ENCODE measurements at regions of chr2 and their contacts with region 1.

Region 1: DNA sequence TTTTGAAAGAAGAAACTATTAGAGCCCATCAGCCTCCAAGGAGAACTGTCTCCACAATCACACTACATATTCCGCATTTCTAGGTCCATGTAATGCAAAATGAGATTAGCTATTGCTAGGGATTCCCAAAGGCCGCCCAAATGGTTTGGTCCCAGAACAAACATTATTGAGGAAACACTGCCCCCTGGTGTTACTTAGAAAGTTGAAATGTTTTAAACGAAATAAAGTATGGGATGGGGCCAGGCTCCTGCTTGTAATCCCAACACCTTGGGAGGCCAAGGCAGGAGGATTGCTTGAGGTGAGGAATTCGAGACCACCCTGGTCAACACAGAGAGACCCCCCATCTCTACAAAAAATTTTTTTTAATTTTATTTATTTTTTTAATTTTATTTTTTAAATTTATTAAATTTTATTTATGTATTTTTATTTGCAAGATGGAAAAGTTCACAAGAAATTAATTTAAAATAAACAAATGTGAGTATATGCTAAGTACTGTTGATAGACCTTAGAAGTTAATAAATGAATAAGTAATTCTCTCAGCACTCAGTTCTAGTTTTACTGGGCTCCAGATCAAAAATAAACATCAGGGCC is 5.5 kb downstream of the NHEJ1 start:
- DNase-seq: peak in 4 of 5 donors; percentile 50 to 62 (median 56)
- H3K4me3 ChIP-seq: no peak overlapping the region
- H3K4me3 Mint-ChIP-seq: no peak overlapping the region
- H3K27ac ChIP-seq: no peak overlapping the region
- H3K27ac Mint-ChIP-seq: no peak overlapping the region
- H3K4me1 ChIP-seq: peaks cover 6% of the 10 kb centered on the region
- H3K4me1 Mint-ChIP-seq: peaks cover 7 to 9% (median 8%) of the 10 kb centered on the region in 4 donors
- H3K27me3 ChIP-seq: no peaks in the 10 kb centered on the region
- H3K27me3 Mint-ChIP-seq: no peaks in the 10 kb centered on the region

Region 2: GRCh38 chr2:218995972-218996711 is 159.0 kb before region 1 on chr2:
- CTCF ChIA-PET with region 1: interaction called, 13 read pairs
- POLR2A ChIA-PET with region 1: no interaction called
- intact Hi-C with region 1: no loop called
- DNase-seq: peak; percentile 66 to 69 (median 67)
- H3K4me3 ChIP-seq: peak overlapping the region in 1 of 2 donors; percentile 47
- H3K4me3 Mint-ChIP-seq: peak overlapping the region in 4 of 8 donors; percentile 25 to 69 (median 40)
- H3K27ac ChIP-seq: no peak overlapping the region
- H3K27ac Mint-ChIP-seq: no peak overlapping the region
- H3K4me1 ChIP-seq: peaks cover 21% of the 10 kb centered on the region
- H3K4me1 Mint-ChIP-seq: peaks cover 0 to 21% (median 11%) of the 10 kb centered on the region in 4 donors
- H3K27me3 ChIP-seq: peaks cover 44% of the 10 kb centered on the region
- H3K27me3 Mint-ChIP-seq: peaks cover 52 to 68% of the 10 kb centered on the region in 2 donors

Region 3: GRCh38 chr2:219017201-219017931 is 137.8 kb before region 1 on chr2:
- CTCF ChIA-PET with region 1: no interaction called
- POLR2A ChIA-PET with region 1: no interaction called
- intact Hi-C with region 1: no loop called
- DNase-seq: no peak
- H3K4me3 ChIP-seq: no peak overlapping the region
- H3K4me3 Mint-ChIP-seq: no peak overlapping the region
- H3K27ac ChIP-seq: no peak overlapping the region
- H3K27ac Mint-ChIP-seq: no peak overlapping the region
- H3K4me1 ChIP-seq: no peaks in the 10 kb centered on the region
- H3K4me1 Mint-ChIP-seq: no peaks in the 10 kb centered on the region
- H3K27me3 ChIP-seq: no peaks in the 10 kb centered on the region
- H3K27me3 Mint-ChIP-seq: peaks cover 5 to 16% of the 10 kb centered on the region in 2 donors

Region 4: DNA sequence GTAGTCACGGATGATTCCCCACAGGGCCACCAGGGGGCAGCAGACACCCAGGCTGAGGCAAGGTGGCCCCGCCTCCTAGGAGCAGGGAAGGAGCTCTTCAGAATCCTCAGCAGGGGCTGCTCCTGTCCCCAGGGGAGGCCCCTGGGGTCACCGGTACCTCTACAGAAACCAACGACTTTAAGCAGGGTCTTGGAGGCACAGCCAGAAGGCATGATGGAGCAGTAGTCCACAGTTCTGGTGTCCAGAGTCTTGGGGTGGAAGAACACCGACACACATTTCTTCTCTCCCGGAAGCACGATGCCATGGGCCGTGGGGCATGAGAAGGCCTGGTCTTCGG is 125.4 kb before region 1 on chr2:
- CTCF ChIA-PET with region 1: interaction called, 62 read pairs
- POLR2A ChIA-PET with region 1: no interaction called
- intact Hi-C with region 1: loop called (anchors 1 kb)
- DNase-seq: peak; percentile 69 to 76 (median 73)
- H3K4me3 ChIP-seq: no peak overlapping the region
- H3K4me3 Mint-ChIP-seq: no peak overlapping the region
- H3K27ac ChIP-seq: no peak overlapping the region
- H3K27ac Mint-ChIP-seq: peak overlapping the region in 1 of 7 donors; percentile 21
- H3K4me1 ChIP-seq: no peaks in the 10 kb centered on the region
- H3K4me1 Mint-ChIP-seq: peaks cover 0 to 1% (median 0%) of the 10 kb centered on the region in 4 donors
- H3K27me3 ChIP-seq: no peaks in the 10 kb centered on the region
- H3K27me3 Mint-ChIP-seq: peaks cover 16 to 21% of the 10 kb centered on the region in 2 donors

Region 5: GRCh38 chr2:219073413-219074129 is 81.6 kb before region 1 on chr2:
- CTCF ChIA-PET with region 1: interaction called, 14 read pairs
- POLR2A ChIA-PET with region 1: no interaction called
- intact Hi-C with region 1: no loop called
- DNase-seq: no peak
- H3K4me3 ChIP-seq: no peak overlapping the region
- H3K4me3 Mint-ChIP-seq: no peak overlapping the region
- H3K27ac ChIP-seq: no peak overlapping the region
- H3K27ac Mint-ChIP-seq: no peak overlapping the region
- H3K4me1 ChIP-seq: no peaks in the 10 kb centered on the region
- H3K4me1 Mint-ChIP-seq: no peaks in the 10 kb centered on the region
- H3K27me3 ChIP-seq: no peaks in the 10 kb centered on the region
- H3K27me3 Mint-ChIP-seq: no peaks in the 10 kb centered on the region

Region 6: GRCh38 chr2:219142329-219142728 is 12.8 kb before region 1 on chr2:
- CTCF ChIA-PET with region 1: interaction called, 26 read pairs
- POLR2A ChIA-PET with region 1: interaction called, 3 read pairs
- intact Hi-C with region 1: no loop called
- DNase-seq: no peak
- H3K4me3 ChIP-seq: no peak overlapping the region
- H3K4me3 Mint-ChIP-seq: no peak overlapping the region
- H3K27ac ChIP-seq: no peak overlapping the region
- H3K27ac Mint-ChIP-seq: peak overlapping the region in 1 of 7 donors; percentile 60
- H3K4me1 ChIP-seq: no peaks in the 10 kb centered on the region
- H3K4me1 Mint-ChIP-seq: peaks cover 0 to 5% (median 1%) of the 10 kb centered on the region in 4 donors
- H3K27me3 ChIP-seq: no peaks in the 10 kb centered on the region
- H3K27me3 Mint-ChIP-seq: no peaks in the 10 kb centered on the region